ENCODE measurements at regions of chr4 and their contacts with region 1.

Region 1: GRCh38 chr4:24657768-24658617 is 73.6 kb upstream of the DHX15 start:
- DNase-seq: peak; percentile 94
- ATAC-seq: peak; percentile 82
- H3K4me3 ChIP-seq: peak overlapping the region; percentile 44; the same call in 1 of the 2 replicates
- H3K27ac ChIP-seq: peak overlapping the region; percentile 82
- H3K4me1 ChIP-seq: peaks cover 40% of the 10 kb centered on the region
- H3K27me3 ChIP-seq: no peaks in the 10 kb centered on the region
- CTCF ChIP-seq: no peak

Region 2: DNA sequence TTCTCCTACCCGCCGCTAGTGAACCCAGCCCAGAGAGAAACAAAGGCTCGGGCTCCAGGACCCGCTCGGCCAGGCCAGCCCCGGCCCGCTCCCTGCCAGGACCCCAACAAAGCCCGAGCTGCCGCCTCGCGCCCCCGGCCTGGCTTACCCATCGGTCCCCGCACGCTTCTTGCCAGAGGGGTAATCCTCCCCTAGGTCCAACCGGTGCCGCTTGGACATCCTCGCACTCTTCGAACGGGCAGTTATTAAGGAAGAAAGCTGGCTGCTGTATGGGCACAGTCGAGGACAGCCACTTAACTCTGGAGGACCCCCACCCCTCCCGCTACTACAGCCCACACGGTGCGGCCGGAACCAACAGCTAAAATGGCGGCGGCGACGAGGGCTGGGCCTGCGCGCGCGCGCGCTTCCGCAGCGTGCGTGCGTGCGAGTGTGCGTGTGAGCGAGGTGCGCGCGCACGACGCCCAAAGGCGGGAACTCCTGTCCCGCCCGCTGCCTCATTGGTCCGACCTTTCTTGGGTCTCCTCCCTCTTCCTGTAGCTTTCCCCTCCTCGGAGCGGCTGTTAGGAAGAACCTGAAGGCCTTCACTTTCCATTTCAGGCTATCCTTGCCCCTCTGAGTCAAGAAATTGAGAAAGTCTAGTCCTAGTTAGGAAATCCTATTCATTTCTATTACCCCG is 73.7 kb before region 1 on chr4 and contains the start of gene DHX15:
- CTCF ChIA-PET with region 1: no interaction called
- POLR2A ChIA-PET with region 1: no interaction called
- intact Hi-C with region 1: loop called (anchors 5 kb)
- DNase-seq: peak; percentile 91
- ATAC-seq: peak; percentile 91
- H3K4me3 ChIP-seq: peak within 1 kb of the TSS; percentile 90
- H3K27ac ChIP-seq: peak within 1 kb of the TSS; percentile 90
- H3K4me1 ChIP-seq: peaks cover 13% of the 10 kb centered on the region; the same call in 1 of the 2 replicates
- H3K27me3 ChIP-seq: no peaks in the 10 kb centered on the region
- CTCF ChIP-seq: no peak
- total RNA-seq, gene DHX15: 201 and 229 TPM in 2 replicates

Region 3: GRCh38 chr4:24644983-24645764 is 12.8 kb before region 1 on chr4:
- CTCF ChIA-PET with region 1: no interaction called
- POLR2A ChIA-PET with region 1: interaction called, 8 read pairs
- intact Hi-C with region 1: loop called (anchors 2 kb)
- DNase-seq: peak; percentile 49
- ATAC-seq: peak; percentile 74
- H3K4me3 ChIP-seq: peak overlapping the region; percentile 61
- H3K27ac ChIP-seq: peak overlapping the region; percentile 9; the same call in 1 of the 2 replicates
- H3K4me1 ChIP-seq: peaks cover 27% of the 10 kb centered on the region
- H3K27me3 ChIP-seq: no peaks in the 10 kb centered on the region
- CTCF ChIP-seq: no peak

Region 4: GRCh38 chr4:24753500-24753899 is 95.5 kb after region 1 on chr4:
- CTCF ChIA-PET with region 1: no interaction called
- POLR2A ChIA-PET with region 1: no interaction called
- intact Hi-C with region 1: loop called (anchors 2 kb)
- DNase-seq: peak; percentile 98
- ATAC-seq: peak; percentile 90
- H3K4me3 ChIP-seq: no peak overlapping the region
- H3K27ac ChIP-seq: peak overlapping the region; percentile 93
- H3K4me1 ChIP-seq: peaks cover 24% of the 10 kb centered on the region
- H3K27me3 ChIP-seq: no peaks in the 10 kb centered on the region
- CTCF ChIP-seq: no peak

Measured in PC-3 (cell line).